ENCODE measurements at regions of chr2 and their contacts with region 1.

Region 1: DNA sequence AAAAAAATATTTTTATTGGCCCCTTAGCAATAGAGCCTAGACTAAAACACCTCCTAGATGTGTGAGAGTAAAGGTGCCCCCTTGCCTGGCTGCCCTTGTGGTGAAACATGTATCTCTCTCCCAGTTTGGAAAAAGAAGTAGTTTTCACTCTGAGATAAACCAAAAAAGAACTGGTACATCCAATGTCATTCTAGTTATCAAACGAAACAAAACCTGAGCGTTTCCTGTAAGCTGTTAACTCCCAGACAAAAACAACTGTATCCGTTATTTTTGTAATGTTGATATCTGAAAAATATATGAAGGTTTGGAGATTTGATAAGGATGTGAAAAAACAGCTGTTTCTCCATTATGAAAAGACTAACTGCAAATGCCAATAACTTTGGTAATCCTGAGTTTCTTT is 24.3 kb downstream of the HEATR5B start:
- DNase-seq: no peak
- H3K4me3 ChIP-seq: no peak overlapping the region
- H3K27ac ChIP-seq: no peak overlapping the region
- H3K27me3 ChIP-seq: no peaks in the 10 kb centered on the region
- CTCF ChIP-seq: no peak

Region 2: GRCh38 chr2:36951574-36951973 is 108.3 kb before region 1 on chr2:
- CTCF ChIA-PET with region 1: no interaction called
- POLR2A ChIA-PET with region 1: no interaction called
- DNase-seq: no peak
- H3K4me3 ChIP-seq: no peak overlapping the region
- H3K27ac ChIP-seq: no peak overlapping the region
- H3K27me3 ChIP-seq: no peaks in the 10 kb centered on the region
- CTCF ChIP-seq: no peak

Region 3: DNA sequence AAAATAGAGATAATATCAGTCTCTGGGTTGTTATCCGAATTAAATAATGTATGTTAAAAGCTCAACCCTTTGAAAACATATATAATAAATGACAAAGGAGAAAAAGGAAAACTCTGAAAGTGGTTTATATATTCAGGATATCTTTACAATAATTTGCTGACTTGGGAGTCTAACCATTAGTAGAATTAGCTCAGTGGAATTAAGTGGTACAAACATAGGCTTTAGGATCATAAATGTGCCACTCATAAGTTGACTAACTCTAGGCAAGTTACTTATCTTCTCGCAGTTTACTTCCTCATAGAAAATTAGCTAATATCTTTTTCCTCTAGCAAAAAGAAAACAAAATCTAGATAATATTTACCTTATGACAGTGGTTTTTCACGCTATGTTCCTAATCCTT is 20.3 kb before region 1 on chr2:
- CTCF ChIA-PET with region 1: no interaction called
- POLR2A ChIA-PET with region 1: interaction called, 10 read pairs
- DNase-seq: no peak
- H3K4me3 ChIP-seq: no peak overlapping the region
- H3K27ac ChIP-seq: no peak overlapping the region
- H3K27me3 ChIP-seq: no peaks in the 10 kb centered on the region
- CTCF ChIP-seq: no peak

Measured in AG04450 (cell line).